ENCODE measurements at regions of chr14 and their contacts with region 1.

Region 1: GRCh38 chr14:50532502-50533240 is at the start of gene MAP4K5:
- DNase-seq: peak; percentile 95
- H3K4me3 ChIP-seq: peak within 1 kb of the TSS; percentile 91
- H3K27ac ChIP-seq: peak within 1 kb of the TSS; percentile 90
- H3K4me1 ChIP-seq: peaks cover 18% of the 10 kb centered on the region
- H3K27me3 ChIP-seq: no peaks in the 10 kb centered on the region
- CTCF ChIP-seq: peak; percentile 88
- total RNA-seq, gene MAP4K5: 57.9 and 58.9 TPM in 2 replicates

Region 2: DNA sequence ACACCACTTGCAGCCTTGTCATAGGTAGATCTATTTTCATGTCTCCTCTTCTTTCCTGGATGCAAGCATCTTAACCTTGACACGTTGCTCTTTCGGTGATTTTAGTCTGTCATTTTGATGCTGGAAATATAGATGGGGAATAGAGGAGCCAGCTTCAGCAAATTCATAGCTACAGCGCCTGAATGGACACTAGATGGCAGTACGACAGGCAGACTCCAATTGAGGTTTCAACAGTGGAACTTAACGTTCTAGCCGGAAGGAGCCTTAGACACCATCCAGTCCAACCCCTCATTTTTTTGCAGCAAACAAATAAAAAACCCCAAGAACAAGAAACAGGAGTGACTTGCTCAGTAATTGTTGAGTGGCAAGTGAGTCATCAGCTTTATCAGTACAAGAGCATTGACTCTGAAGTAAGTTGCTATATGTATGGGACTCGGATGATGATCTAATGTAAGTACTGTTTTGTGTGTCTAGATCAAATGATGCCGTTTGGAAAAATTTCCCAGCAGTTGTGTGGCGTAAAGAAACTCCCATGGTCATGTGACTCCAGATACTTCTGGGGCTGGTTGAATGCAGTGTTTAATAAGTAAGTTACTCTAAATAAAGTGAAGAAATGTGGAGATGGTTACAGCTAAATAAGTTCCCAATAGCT is 211.5 kb before region 1 on chr14:
- CTCF ChIA-PET with region 1: interaction called, 6 read pairs
- POLR2A ChIA-PET with region 1: no interaction called
- intact Hi-C with region 1: loop called (anchors 1 kb)
- DNase-seq: peak; percentile 93
- H3K4me3 ChIP-seq: peak overlapping the region; percentile 34
- H3K27ac ChIP-seq: peak overlapping the region; percentile 60
- H3K4me1 ChIP-seq: no peaks in the 10 kb centered on the region
- H3K27me3 ChIP-seq: no peaks in the 10 kb centered on the region
- CTCF ChIP-seq: peak; percentile 98

Region 3: DNA sequence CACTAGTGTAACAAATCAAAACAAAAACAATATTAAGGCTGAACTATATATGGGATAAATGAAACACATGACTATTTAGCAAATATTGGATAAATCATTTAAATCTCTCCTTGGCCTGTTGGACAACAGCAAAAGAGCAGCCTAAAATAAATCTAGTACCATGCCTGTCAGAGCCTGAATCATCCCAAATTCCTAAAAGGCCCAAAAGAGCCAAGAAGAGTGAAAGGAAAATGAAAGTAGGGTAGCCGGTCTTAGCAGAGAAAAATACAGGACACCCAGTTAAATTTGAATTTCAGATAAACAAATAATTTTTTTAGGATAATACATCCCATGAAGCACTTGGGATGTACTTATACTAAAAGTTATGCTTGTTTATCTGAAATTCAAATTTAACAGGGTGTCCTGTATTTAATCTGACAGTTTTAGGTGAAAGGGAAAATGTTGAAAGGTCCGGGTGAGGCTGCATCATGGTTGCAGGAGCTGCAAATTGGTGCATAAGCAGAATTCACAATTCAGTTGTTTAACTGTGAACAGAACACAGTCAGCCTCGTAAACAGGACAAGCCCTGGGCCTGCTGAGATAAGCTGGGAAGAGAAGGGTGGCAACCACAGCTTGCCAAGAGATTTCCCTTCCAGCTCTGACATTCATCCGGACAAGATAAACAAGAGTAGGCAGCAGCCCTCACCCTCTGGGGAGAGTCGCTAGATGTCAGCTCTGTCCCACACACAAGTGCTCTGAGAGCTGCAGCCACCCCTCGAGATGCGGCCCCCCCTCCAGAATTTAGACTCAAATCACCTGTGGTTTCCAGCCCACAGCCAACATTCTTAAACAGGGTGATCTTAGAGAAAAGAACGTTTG is 190.2 kb before region 1 on chr14:
- CTCF ChIA-PET with region 1: interaction called, 3 read pairs
- POLR2A ChIA-PET with region 1: no interaction called
- intact Hi-C with region 1: loop called (anchors 5 kb)
- DNase-seq: peak; percentile 59
- H3K4me3 ChIP-seq: no peak overlapping the region
- H3K27ac ChIP-seq: no peak overlapping the region
- H3K4me1 ChIP-seq: peaks cover 17% of the 10 kb centered on the region
- H3K27me3 ChIP-seq: no peaks in the 10 kb centered on the region
- CTCF ChIP-seq: peak; percentile 42; the same call in 1 of the 2 replicates

Region 4: GRCh38 chr14:50425816-50426215 is 106.9 kb before region 1 on chr14:
- CTCF ChIA-PET with region 1: no interaction called
- POLR2A ChIA-PET with region 1: no interaction called
- intact Hi-C with region 1: no loop called
- DNase-seq: no peak
- H3K4me3 ChIP-seq: no peak overlapping the region
- H3K27ac ChIP-seq: no peak overlapping the region
- H3K4me1 ChIP-seq: no peaks in the 10 kb centered on the region
- H3K27me3 ChIP-seq: no peaks in the 10 kb centered on the region
- CTCF ChIP-seq: no peak

Measured in A673 (cell line).